Lower lobe of right lung (tissue), 2 donors: ENCODE measurements at regions of chr11 and their contacts with region 1.

Region 1: GRCh38 chr11:123301696-123302400 is 106.8 kb upstream of the CLMP start:
- DNase-seq: peak; percentile 74
- ATAC-seq: peak; percentile 90 to 92
- H3K4me3 ChIP-seq: peak overlapping the region; percentile 53
- H3K27ac ChIP-seq: no peak overlapping the region
- H3K4me1 ChIP-seq: peaks cover 21% of the 10 kb centered on the region
- H3K27me3 ChIP-seq: peaks cover 30% of the 10 kb centered on the region
- CTCF ChIP-seq: peak; percentile 91

Region 2: GRCh38 chr11:123195188-123196059 is 106.4 kb before region 1 on chr11 and contains the start of gene CLMP:
- intact Hi-C with region 1: no loop called
- DNase-seq: no peak
- ATAC-seq: peak; percentile 67 to 75
- H3K4me3 ChIP-seq: peak within 1 kb of the TSS; percentile 51
- H3K27ac ChIP-seq: peak within 1 kb of the TSS; percentile 64
- H3K4me1 ChIP-seq: peaks cover 16% of the 10 kb centered on the region
- H3K27me3 ChIP-seq: peaks cover 51% of the 10 kb centered on the region
- CTCF ChIP-seq: no peak
- total RNA-seq, gene CLMP: 15.1 TPM

Region 3: DNA sequence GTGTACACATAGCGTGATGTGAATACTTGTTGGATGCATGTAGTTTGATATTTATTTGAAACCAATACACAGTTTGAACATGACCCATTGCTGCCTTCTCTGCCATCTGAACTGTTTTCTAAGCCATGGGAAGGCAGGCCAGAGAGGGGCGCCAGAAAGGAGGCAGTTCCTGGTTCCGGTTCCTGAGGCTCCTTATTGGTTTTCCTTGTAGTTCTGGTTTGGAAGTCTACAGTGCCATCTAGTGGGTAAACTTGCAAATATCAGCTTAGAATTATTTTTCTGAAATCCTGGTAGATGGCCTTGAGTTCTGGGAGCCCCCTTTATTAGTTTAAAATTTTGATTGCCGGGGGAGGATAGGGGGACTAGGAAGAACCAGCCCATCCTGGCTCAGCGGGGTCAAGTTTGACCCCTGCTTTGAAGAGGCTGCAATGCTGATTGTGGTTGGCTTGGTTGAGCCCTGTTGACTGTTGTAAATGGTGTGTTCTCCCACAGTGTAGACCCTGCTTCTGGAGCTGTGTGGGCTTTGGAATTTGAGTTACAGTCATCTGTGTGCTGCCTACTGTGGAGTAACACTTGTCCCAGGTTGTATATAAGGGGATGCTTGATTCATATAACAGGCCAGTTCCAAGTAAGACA is 176.6 kb after region 1 on chr11:
- intact Hi-C with region 1: loop called (anchors 5 kb)
- DNase-seq: no peak
- ATAC-seq: peak; percentile 80 to 85
- H3K4me3 ChIP-seq: peak overlapping the region; percentile 17
- H3K27ac ChIP-seq: no peak overlapping the region
- H3K4me1 ChIP-seq: peaks cover 10% of the 10 kb centered on the region
- H3K27me3 ChIP-seq: no peaks in the 10 kb centered on the region
- CTCF ChIP-seq: peak; percentile 69

Region 4: GRCh38 chr11:123853038-123853437 is 551.2 kb after region 1 on chr11:
- intact Hi-C with region 1: no loop called
- DNase-seq: no peak
- ATAC-seq: no peak
- H3K4me3 ChIP-seq: no peak overlapping the region
- H3K27ac ChIP-seq: no peak overlapping the region
- H3K4me1 ChIP-seq: no peaks in the 10 kb centered on the region
- H3K27me3 ChIP-seq: no peaks in the 10 kb centered on the region
- CTCF ChIP-seq: no peak